OCI-LY7 (cell line): ENCODE measurements at regions of chr14 and their contacts with region 1.

Region 1: DNA sequence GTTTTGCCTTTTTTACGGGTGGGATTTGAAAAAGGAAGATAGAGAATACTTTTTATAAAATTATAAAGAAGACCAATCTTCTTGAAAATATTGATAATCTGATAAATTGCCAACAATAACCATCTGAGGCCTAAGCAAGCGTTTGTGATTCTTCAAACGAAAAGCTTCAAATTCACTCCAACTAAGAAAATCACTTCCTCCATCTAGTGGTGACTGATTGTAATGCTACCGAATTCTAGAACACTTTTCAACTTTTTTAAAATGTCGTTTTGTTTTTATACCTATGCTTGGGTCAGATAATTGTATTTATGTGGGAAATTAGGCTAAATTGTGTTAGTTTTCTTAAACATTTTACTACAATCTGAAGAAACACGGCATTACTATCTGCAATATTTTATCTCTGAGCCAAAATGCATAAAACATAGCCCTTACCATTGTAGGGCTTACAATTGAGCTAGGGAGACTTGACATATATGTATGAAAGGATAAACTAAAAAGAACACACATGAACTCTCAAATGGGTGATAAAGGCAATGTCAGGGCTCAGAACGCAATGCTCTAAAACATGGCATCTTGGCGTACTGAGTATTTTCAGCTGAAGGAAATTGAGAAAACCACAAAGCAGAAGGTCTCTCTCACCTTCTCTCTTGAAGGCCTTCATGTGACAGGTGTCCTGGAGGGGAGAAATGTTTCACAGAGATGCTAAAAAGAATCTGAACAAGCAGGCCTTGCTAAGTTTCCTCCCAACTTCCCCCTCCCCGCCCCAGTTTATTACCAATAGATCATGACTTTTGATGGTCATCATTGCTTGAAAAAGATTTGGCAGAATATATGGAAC is 36.8 kb upstream of the G2E3 start:
- DNase-seq: peak; percentile 43
- H3K4me3 ChIP-seq: no peak overlapping the region
- H3K27ac ChIP-seq: no peak overlapping the region
- H3K4me1 ChIP-seq: no peaks in the 10 kb centered on the region
- CTCF ChIP-seq: peak; percentile 92

Region 2: DNA sequence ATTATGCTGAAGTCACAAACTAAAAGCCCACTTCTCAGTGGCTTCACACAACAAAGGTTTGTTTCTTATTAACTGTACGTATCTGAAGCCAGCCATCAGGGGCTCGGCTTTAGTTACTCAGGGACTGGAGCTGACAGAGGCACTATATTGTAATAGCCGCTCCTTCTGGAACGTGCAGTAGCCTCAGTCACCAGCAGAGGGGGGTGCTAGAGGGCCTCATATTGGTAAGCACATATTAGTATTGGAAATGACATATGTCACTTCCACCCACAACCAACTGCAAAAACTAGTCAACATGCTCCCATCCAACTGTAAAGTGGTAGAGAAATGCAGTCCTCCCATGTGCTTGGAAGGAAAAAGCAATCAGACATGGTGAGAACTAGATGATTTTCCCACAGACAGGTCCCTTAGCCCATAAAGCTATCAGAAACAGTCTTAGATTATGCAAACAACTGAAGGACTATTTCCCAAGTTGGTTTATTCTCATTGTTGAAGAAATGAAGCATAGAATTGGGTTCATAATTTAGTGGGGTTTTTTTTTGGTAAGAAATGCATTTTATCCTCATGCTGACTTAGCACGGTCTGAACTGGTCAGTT is 146.7 kb before region 1 on chr14:
- CTCF ChIA-PET with region 1: no interaction called
- POLR2A ChIA-PET with region 1: no interaction called
- intact Hi-C with region 1: loop called (anchors 5 kb)
- DNase-seq: peak; percentile 51
- H3K4me3 ChIP-seq: no peak overlapping the region
- H3K27ac ChIP-seq: no peak overlapping the region
- H3K4me1 ChIP-seq: no peaks in the 10 kb centered on the region
- CTCF ChIP-seq: peak; percentile 89

Region 3: GRCh38 chr14:30915596-30915995 is 393.5 kb after region 1 on chr14:
- CTCF ChIA-PET with region 1: no interaction called
- POLR2A ChIA-PET with region 1: no interaction called
- intact Hi-C with region 1: no loop called
- DNase-seq: no peak
- H3K4me3 ChIP-seq: no peak overlapping the region
- H3K27ac ChIP-seq: no peak overlapping the region
- H3K4me1 ChIP-seq: peaks cover 6% of the 10 kb centered on the region
- CTCF ChIP-seq: no peak